Activated CD4-positive, alpha-beta T cell treated with anti-CD3 and anti-CD28 coated beads, Interleukin-2, amount 10 ng/mL, durations not matched to agents 24 days and 14 days (primary cell): ENCODE measurements at regions of chr11 and their contacts with region 1.

Region 1: DNA sequence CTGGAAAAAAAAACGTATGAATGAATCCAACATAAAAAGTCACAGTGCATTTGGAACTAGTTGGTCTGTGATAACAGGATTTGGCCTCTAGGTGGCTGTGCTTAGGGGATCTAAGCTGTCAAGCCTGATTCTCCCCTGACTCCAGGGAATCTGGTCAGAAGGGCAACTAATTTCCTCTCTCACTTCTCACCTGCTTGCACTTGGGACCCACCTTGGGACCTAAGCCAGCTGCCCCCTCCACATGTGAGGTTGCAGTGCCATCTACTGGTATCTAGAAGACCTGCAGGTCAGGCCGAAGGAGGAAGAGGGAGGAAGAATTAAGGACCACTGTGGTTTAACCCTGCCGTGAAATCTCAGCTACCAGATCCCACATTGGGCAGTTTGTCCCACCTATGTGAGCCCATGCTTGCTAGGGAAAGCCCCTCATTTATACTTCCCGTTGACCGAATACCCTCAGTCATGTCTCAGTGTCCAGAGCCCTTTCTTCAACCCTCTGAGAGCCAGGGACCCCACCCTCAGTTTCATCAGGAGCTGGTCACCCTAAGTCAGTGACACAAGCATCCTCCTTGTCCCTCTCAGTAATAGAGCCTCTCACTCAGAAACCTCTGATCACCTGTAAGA is 33.2 kb upstream of the CAVIN3 start:
- DNase-seq: peak; percentile 88
- H3K4me3 Mint-ChIP-seq: no peak overlapping the region
- H3K27ac Mint-ChIP-seq: peak overlapping the region; percentile 16
- H3K4me1 Mint-ChIP-seq: peaks cover 36% of the 10 kb centered on the region
- H3K27me3 Mint-ChIP-seq: no peaks in the 10 kb centered on the region

Region 2: GRCh38 chr11:5818245-5818886 is 535.1 kb before region 1 on chr11:
- intact Hi-C with region 1: loop called (anchors 10 kb)
- DNase-seq: no peak
- H3K4me3 Mint-ChIP-seq: peak overlapping the region; percentile 72
- H3K27ac Mint-ChIP-seq: peak overlapping the region; percentile 7
- H3K4me1 Mint-ChIP-seq: peaks cover 12% of the 10 kb centered on the region
- H3K27me3 Mint-ChIP-seq: peaks cover 6% of the 10 kb centered on the region

Region 3: GRCh38 chr11:6022956-6023355 is 330.5 kb before region 1 on chr11:
- intact Hi-C with region 1: loop called (anchors 5 kb)
- DNase-seq: peak; percentile 69
- H3K4me3 Mint-ChIP-seq: no peak overlapping the region
- H3K27ac Mint-ChIP-seq: no peak overlapping the region
- H3K4me1 Mint-ChIP-seq: no peaks in the 10 kb centered on the region
- H3K27me3 Mint-ChIP-seq: peaks cover 39% of the 10 kb centered on the region

Region 4: GRCh38 chr11:6298605-6299004 is 54.9 kb before region 1 on chr11:
- intact Hi-C with region 1: loop called (anchors 1 kb)
- DNase-seq: no peak
- H3K4me3 Mint-ChIP-seq: no peak overlapping the region
- H3K27ac Mint-ChIP-seq: no peak overlapping the region
- H3K4me1 Mint-ChIP-seq: no peaks in the 10 kb centered on the region
- H3K27me3 Mint-ChIP-seq: peaks cover 11% of the 10 kb centered on the region

Region 5: GRCh38 chr11:6321961-6322362 is 31.5 kb before region 1 on chr11:
- intact Hi-C with region 1: loop called (anchors 1 kb)
- DNase-seq: no peak
- H3K4me3 Mint-ChIP-seq: peak overlapping the region; percentile 88
- H3K27ac Mint-ChIP-seq: peak overlapping the region; percentile 91
- H3K4me1 Mint-ChIP-seq: peaks cover 45% of the 10 kb centered on the region
- H3K27me3 Mint-ChIP-seq: peaks cover 14% of the 10 kb centered on the region